ENCODE measurements at regions of chr20 and their contacts with region 1.

Region 1: DNA sequence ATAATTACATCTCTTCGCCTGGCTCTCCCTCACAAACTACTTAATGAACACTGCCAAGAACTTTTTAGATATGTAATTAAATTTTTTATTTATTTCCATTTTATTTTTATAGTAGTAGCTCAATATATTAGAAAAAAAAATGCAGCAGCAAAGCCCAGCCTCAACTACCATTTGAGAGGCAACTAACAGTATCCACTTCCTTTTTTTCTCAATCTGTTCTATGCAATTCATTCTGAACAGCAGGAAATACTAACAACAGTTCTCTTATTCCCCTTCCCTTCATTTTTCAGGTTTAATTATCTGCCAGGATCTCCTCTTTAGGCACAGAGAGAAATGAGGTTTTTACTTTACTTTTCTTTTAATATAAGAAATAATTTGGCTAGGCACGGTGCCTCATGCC is 112.7 kb downstream of the ZNF217 start:
- DNase-seq: no peak
- H3K4me3 ChIP-seq: no peak overlapping the region
- H3K27ac ChIP-seq: no peak overlapping the region
- H3K4me1 ChIP-seq: no peaks in the 10 kb centered on the region
- H3K27me3 ChIP-seq: peaks cover 50% of the 10 kb centered on the region
- CTCF ChIP-seq: no peak

Region 2: DNA sequence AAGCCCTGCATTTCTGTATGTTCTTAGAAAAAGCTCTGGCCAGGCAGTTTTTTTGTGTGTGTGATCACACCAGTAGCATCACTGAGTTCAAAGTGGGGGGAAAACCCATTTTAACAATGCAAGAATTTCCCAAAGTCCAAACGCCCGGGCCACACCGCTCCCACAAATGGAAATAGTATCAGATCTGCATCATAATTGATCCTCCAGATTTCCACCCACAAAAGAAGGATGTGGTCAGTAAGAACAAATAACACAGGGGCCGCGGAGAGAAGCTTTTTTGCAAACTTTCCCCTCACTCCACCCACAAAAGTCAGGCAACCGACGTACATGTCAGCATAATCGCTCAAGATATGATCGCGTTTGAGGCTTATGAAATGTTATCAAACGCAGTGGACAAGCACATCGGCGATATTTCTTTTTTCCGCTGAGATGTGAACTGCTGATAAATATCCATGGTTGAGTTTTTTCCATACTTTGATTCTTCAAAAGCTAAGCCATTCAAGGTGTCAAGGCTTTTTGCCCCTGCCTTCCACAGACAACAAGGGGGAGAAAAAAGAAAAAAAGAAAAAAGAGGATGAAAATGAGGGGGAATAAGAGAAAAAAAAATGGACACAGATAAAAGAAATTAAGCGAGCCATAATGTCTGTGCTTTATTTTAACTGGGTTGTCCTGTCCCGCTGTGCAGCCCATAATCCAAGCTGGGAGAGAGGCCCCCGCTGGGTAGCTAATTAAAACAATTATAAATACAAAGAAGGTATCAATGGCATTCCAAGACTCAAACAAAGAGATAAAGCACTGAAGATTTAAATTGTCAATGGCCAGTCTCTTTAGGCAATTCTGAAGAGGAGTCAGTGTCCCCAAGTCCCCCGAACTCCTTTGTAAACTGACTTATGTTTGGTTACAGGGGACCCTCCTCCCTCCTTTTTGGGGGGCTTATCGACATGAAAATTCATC is 1432.8 kb before region 1 on chr20:
- CTCF ChIA-PET with region 1: no interaction called
- POLR2A ChIA-PET with region 1: no interaction called
- intact Hi-C with region 1: no loop called
- DNase-seq: no peak
- H3K4me3 ChIP-seq: no peak overlapping the region
- H3K27ac ChIP-seq: no peak overlapping the region
- H3K4me1 ChIP-seq: no peaks in the 10 kb centered on the region
- H3K27me3 ChIP-seq: no peaks in the 10 kb centered on the region
- CTCF ChIP-seq: no peak

Region 3: DNA sequence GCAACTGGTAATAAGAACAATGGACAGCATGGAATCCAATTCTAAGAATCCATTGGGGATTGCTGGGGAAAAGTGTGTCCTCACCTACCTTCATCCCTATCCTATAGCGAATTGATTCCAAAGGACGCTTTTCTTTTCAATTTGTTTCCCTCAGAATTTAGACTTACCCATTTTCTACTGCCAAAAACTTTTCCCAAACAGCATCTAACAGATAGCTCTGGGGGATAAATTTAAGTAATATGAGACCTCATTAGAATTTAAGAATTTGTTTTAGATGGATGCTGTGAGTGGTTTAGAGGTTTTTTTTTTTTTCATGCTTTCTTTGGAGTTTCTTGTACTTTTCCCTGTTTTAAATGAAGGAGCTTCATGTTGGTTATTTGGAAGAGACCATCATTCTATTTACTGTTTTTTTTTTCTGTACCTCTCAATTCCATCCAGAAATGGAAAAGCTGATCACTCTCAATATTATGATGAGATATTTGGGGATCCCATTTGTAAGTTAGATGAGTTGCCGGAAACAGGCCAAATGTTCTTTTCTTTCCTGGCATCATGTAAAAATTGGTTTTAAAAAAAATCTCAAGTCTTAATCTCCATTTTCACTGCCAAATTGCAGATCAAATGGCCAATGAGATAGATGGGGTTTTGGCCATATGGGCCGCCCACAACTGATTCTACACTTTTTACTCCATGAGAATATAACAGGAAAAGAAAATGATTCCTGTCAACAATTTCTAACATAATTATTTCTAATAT is 483.8 kb after region 1 on chr20:
- CTCF ChIA-PET with region 1: no interaction called
- POLR2A ChIA-PET with region 1: interaction called, 13 read pairs
- intact Hi-C with region 1: no loop called
- DNase-seq: peak in 1 of 2 experiments; percentile 23
- H3K4me3 ChIP-seq: no peak overlapping the region
- H3K27ac ChIP-seq: no peak overlapping the region
- H3K4me1 ChIP-seq: no peaks in the 10 kb centered on the region
- H3K27me3 ChIP-seq: no peaks in the 10 kb centered on the region
- CTCF ChIP-seq: no peak

Measured in PC-9 (cell line).